WTC11 (cell line): ENCODE measurements at regions of chr7 and their contacts with region 1.

Region 1: DNA sequence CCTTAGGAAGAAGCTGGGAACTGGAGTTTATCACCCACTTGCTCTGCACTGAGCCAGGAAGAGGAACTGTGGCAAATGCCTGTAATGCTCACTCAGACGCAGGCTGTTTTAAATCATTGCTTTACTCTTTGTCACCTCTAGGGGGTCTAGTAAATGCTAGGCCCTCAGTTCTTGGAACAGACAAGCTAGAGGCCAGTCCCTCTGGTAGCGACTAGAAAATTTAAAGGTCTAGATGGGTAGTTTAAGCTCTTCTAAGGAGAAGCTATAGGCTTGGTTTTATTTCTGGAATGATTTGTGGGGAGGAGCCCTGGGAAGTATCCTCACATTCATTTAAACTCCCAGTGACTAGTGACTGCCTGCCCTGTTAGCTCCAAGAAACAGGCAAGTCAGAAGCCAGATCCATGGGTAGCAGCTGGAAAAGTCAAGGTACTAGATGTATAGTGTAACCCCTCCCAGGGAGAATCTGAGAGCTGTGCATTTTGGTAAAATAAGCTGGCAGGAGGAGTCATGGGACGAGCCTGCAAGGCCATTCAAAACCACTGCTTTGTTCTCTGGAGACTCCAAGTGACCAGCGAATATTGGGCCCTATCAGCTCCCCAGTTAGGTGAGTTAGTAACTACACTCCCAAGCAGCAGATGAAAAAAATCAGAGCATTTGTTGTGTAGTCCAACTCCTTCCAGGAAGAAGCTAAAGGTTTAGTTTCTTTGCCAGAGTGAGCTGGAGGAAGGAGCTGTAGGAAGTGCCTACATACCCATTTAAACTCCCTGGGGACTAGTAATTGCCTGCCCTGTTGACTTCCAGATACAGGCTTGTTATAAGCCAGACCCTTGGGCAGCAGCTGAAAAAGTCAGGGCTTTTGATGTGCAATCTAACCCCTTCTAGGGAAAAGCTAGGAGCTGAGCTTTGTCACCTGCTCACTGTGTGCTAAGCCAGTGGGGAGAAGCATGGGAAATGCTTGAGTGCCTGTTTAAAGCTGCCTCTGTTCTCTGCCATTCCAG is 68.9 kb downstream of the DYNC1I1 start:
- DNase-seq: no peak
- ATAC-seq: peak; percentile 94
- H3K4me3 Mint-ChIP-seq: no peak overlapping the region
- H3K27ac Mint-ChIP-seq: no peak overlapping the region; the same call in 1 of the 2 replicates
- H3K4me1 Mint-ChIP-seq: peaks cover 45% of the 10 kb centered on the region
- H3K27me3 Mint-ChIP-seq: peaks cover 2% of the 10 kb centered on the region; the same call in 1 of the 2 replicates
- CTCF ChIP-seq: peak; percentile 55

Region 2: GRCh38 chr7:95723592-95724180 is 117.6 kb before region 1 on chr7:
- CTCF ChIA-PET with region 1: interaction called, 32 read pairs
- POLR2A ChIA-PET with region 1: no interaction called
- DNase-seq: peak; percentile 60
- ATAC-seq: peak; percentile 91
- H3K4me3 Mint-ChIP-seq: no peak overlapping the region
- H3K27ac Mint-ChIP-seq: no peak overlapping the region
- H3K4me1 Mint-ChIP-seq: no peaks in the 10 kb centered on the region
- H3K27me3 Mint-ChIP-seq: no peaks in the 10 kb centered on the region
- CTCF ChIP-seq: peak; percentile 54

Region 3: GRCh38 chr7:95772771-95773581 is 68.3 kb before region 1 on chr7:
- CTCF ChIA-PET with region 1: interaction called, 11 read pairs
- POLR2A ChIA-PET with region 1: no interaction called
- DNase-seq: peak; percentile 22
- ATAC-seq: peak; percentile 50
- H3K4me3 Mint-ChIP-seq: peak overlapping the region; percentile 62
- H3K27ac Mint-ChIP-seq: no peak overlapping the region
- H3K4me1 Mint-ChIP-seq: peaks cover 19% of the 10 kb centered on the region
- H3K27me3 Mint-ChIP-seq: peaks cover 48% of the 10 kb centered on the region
- CTCF ChIP-seq: no peak

Region 4: DNA sequence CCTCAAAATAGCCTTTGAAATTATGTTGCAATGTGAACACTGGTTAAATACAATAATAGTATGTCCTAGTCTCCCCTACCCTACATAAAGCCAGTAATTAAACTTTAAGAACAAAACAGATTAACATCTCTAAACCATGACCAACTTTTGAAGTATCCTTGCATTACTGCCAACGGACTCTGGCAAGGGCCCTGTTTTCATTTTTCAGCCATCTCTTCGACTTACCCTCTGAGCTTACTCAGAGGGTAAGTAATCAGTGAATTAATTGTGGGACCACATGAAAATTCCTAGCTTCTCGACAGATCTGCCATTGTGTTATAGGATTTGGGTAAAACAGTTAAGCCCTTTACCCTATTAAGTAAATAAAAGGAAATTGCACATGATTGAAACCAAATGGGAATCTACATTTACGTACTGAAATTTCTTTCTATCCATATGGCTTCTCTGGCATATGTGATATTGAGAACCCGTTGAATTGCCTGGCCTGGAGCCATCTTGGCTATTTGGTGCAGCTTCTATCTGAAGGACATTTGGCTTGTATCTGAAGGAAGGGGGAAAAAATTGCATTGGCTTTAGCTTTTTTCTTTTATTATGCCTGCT is 29.3 kb before region 1 on chr7:
- CTCF ChIA-PET with region 1: interaction called, 17 read pairs
- POLR2A ChIA-PET with region 1: no interaction called
- DNase-seq: no peak
- ATAC-seq: no peak
- H3K4me3 Mint-ChIP-seq: no peak overlapping the region
- H3K27ac Mint-ChIP-seq: no peak overlapping the region
- H3K4me1 Mint-ChIP-seq: peaks cover 16% of the 10 kb centered on the region
- H3K27me3 Mint-ChIP-seq: no peaks in the 10 kb centered on the region
- CTCF ChIP-seq: no peak

Region 5: GRCh38 chr7:95859434-95859833 is 18.2 kb after region 1 on chr7:
- CTCF ChIA-PET with region 1: interaction called, 33 read pairs
- POLR2A ChIA-PET with region 1: no interaction called
- DNase-seq: peak; percentile 17
- ATAC-seq: peak; percentile 93
- H3K4me3 Mint-ChIP-seq: no peak overlapping the region
- H3K27ac Mint-ChIP-seq: no peak overlapping the region
- H3K4me1 Mint-ChIP-seq: peaks cover 14% of the 10 kb centered on the region
- H3K27me3 Mint-ChIP-seq: no peaks in the 10 kb centered on the region
- CTCF ChIP-seq: no peak

Region 6: DNA sequence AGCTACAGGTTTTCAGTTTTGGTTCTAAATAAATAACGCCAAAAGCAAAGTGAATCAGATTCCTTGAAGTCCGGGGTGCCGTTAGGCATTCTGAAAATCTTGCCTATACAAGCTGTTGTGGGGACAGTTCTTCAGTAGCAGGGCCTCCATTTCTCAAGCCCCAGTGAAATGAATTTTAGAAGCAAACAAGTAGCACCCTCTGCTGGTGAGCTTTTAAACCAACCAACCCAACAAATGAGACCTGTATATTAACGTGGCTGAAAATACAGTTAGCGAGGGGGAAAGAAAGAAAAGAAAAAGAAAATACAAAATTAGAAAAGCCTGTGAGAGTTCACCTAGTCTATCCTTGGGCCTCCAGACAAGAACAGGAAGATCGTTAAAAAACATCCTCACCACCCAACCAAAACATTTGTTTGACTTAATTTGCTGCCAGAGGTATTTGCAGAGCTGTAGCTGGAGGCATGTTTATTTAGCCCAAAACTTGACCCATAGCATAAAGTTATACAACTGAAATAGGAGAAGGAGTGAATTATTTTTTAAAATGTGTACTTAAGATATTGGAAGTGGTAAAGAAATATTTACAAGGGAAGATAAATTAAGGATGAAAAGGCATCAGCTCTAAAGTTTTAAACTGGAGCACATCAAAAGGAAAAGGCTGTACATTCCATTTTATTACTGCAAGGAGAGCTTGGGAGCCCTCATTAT is 30.0 kb after region 1 on chr7:
- CTCF ChIA-PET with region 1: interaction called, 35 read pairs
- POLR2A ChIA-PET with region 1: no interaction called
- DNase-seq: peak; percentile 38
- ATAC-seq: peak; percentile 76
- H3K4me3 Mint-ChIP-seq: no peak overlapping the region
- H3K27ac Mint-ChIP-seq: no peak overlapping the region
- H3K4me1 Mint-ChIP-seq: peaks cover 8% of the 10 kb centered on the region
- H3K27me3 Mint-ChIP-seq: no peaks in the 10 kb centered on the region
- CTCF ChIP-seq: peak; percentile 35

Region 7: DNA sequence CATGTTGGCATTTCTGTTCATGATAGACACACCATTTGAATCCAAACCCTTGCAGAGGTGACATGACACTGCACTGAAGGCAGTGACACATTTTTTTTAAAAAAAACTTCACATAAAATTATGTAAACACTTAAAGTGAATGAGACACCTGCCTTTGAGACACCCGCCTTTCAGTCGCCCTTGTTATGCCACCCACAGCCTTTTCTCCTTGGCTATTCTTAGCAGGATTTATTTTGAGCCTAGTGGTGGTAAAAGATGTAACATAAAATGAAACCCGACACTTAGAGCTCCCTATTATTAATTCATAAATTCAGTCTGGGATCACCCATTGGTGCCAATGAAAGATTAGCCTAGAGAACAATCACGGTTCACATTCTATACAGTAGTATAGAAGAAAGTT is 92.4 kb after region 1 on chr7:
- CTCF ChIA-PET with region 1: no interaction called
- POLR2A ChIA-PET with region 1: no interaction called
- DNase-seq: no peak
- ATAC-seq: no peak
- H3K4me3 Mint-ChIP-seq: no peak overlapping the region
- H3K27ac Mint-ChIP-seq: no peak overlapping the region
- H3K4me1 Mint-ChIP-seq: no peaks in the 10 kb centered on the region
- H3K27me3 Mint-ChIP-seq: no peaks in the 10 kb centered on the region
- CTCF ChIP-seq: no peak

Region 8: GRCh38 chr7:95950698-95951097 is 109.4 kb after region 1 on chr7:
- CTCF ChIA-PET with region 1: no interaction called
- POLR2A ChIA-PET with region 1: no interaction called
- DNase-seq: no peak
- ATAC-seq: no peak
- H3K4me3 Mint-ChIP-seq: no peak overlapping the region
- H3K27ac Mint-ChIP-seq: no peak overlapping the region
- H3K4me1 Mint-ChIP-seq: no peaks in the 10 kb centered on the region; the same call in 1 of the 2 replicates
- H3K27me3 Mint-ChIP-seq: no peaks in the 10 kb centered on the region
- CTCF ChIP-seq: no peak